Endothelial cell of umbilical vein (primary cell): ENCODE measurements at regions of chr14 and their contacts with region 1.

Region 1: DNA sequence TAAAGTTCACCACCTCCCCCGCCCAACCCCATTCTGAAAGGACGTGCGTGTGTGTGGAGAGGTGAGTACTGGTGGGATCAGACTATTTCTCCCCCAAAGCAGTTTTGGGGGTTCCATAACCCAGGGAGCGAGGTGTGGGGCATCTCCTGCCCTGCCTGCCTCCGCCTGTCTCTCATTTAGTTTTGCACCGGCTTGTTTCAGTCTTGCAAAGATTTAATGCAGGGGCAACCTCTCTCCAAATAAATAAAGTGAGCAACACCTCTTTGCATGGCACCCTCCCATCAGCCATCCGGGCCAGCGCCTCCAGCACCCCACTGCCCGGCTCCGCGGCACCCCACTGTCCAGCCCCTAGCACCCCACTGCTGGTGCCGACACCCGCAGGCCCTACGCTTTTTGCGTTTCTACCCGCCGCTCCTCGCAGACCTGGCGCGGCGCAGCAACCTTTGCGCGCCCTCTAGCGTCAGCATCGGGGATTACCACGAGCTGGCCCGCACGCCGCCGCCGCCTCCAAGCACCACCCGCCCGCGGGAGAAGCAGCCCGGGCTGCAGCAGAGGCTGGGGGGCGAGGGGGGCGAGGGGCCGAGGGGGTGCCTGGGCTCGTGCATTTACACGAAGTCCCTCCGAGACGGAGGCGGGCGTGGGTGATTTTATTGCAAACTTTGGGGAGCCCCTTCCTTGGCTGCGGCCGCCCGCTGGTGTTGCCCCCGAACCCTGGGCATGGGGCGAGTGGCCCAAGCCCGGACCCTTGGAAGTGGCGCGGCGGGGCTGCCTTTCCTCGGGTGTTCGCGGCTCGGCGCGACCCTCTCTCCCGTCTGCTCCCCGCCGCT is 55.8 kb upstream of the VRK1 start:
- DNase-seq: peak; percentile 46
- H3K4me3 ChIP-seq: peak overlapping the region in 1 of 3 experiments; percentile 41
- H3K27ac ChIP-seq: no peak overlapping the region
- H3K4me1 ChIP-seq: no peaks in the 10 kb centered on the region
- H3K27me3 ChIP-seq: peaks cover 16 to 20% of the 10 kb centered on the region in 2 experiments
- CTCF ChIP-seq: peak; percentile 67 to 85
- POLR2A ChIP-seq: no peak

Region 2: GRCh38 chr14:96297000-96297399 is 444.4 kb before region 1 on chr14:
- CTCF ChIA-PET with region 1: interaction called, 3 read pairs
- POLR2A ChIA-PET with region 1: no interaction called
- dilution Hi-C with region 1: no loop called
- intact Hi-C with region 1: loop called (anchors 10 kb)
- DNase-seq: peak; percentile 22
- H3K4me3 ChIP-seq: no peak overlapping the region
- H3K27ac ChIP-seq: no peak overlapping the region
- H3K4me1 ChIP-seq: peaks cover 8% of the 10 kb centered on the region
- H3K27me3 ChIP-seq: no peaks in the 10 kb centered on the region
- CTCF ChIP-seq: peak; percentile 15 to 25
- POLR2A ChIP-seq: no peak

Region 3: DNA sequence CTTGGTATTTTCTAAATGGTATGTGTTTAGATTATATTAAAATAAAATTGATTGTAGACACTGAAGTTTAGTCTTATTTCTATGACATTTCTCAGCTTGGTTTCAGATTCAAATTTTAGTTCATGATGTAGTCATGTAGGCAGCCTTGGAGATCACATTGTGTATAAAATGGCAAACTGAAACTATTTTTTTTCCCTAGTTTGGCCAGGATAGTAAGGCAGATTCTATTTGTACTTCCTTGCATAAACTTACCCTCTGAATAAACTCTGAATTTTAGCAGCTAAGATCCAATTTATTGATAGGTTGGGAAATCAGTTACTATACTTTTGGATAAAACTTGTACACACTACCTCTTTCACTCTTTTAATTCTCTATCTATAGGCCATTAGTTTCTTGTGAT is 208.7 kb before region 1 on chr14:
- CTCF ChIA-PET with region 1: no interaction called
- POLR2A ChIA-PET with region 1: no interaction called
- dilution Hi-C with region 1: no loop called
- intact Hi-C with region 1: no loop called
- DNase-seq: no peak
- H3K4me3 ChIP-seq: no peak overlapping the region
- H3K27ac ChIP-seq: no peak overlapping the region
- H3K4me1 ChIP-seq: no peaks in the 10 kb centered on the region
- H3K27me3 ChIP-seq: no peaks in the 10 kb centered on the region
- CTCF ChIP-seq: no peak
- POLR2A ChIP-seq: no peak

Region 4: DNA sequence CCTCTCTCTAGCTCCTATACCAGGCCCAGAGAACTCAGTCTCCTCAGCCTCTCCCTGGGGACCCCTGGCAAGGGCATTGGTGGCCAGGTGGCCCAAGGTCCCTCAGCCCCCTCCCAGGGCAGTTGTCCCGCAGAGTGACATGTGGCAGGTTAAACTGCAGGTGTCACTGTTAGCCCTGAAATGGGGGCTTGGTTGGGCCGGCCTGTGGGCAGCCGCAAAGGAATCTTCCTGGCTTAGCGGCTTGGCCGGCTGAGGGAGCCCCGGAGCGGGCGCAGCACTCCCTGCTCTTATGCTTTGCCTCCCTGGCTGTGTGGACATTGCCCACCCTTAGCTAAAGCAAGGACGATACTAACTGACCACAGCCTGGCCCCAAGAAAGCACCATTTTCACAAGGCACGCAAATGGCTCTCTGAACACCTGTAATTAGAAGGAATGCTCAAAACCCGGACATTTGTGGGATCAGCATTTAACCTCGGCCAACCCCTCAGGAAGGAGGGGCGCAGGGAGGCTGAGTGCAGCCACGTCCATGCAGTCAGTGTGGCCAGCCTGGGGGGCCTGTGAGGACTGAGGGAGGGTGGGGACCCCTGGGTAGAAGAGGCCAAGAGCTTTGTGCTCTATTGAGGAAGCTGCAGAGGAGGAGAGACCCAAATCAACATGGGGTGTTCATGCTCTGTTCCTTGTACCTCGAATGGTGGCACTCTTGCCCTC is 157.0 kb before region 1 on chr14:
- CTCF ChIA-PET with region 1: interaction called, 7 read pairs
- POLR2A ChIA-PET with region 1: no interaction called
- dilution Hi-C with region 1: no loop called
- intact Hi-C with region 1: loop called (anchors 1 kb)
- DNase-seq: peak; percentile 21
- H3K4me3 ChIP-seq: no peak overlapping the region
- H3K27ac ChIP-seq: no peak overlapping the region
- H3K4me1 ChIP-seq: no peaks in the 10 kb centered on the region
- H3K27me3 ChIP-seq: peaks cover 0 to 4% of the 10 kb centered on the region in 2 experiments
- CTCF ChIP-seq: peak; percentile 27 to 47
- POLR2A ChIP-seq: no peak

Region 5: GRCh38 chr14:96729889-96730288 is 11.5 kb before region 1 on chr14:
- CTCF ChIA-PET with region 1: interaction called, 16 read pairs
- POLR2A ChIA-PET with region 1: no interaction called
- dilution Hi-C with region 1: no loop called
- intact Hi-C with region 1: no loop called
- DNase-seq: no peak
- H3K4me3 ChIP-seq: no peak overlapping the region
- H3K27ac ChIP-seq: no peak overlapping the region
- H3K4me1 ChIP-seq: no peaks in the 10 kb centered on the region
- H3K27me3 ChIP-seq: no peaks in the 10 kb centered on the region
- CTCF ChIP-seq: no peak
- POLR2A ChIP-seq: no peak

Region 6: DNA sequence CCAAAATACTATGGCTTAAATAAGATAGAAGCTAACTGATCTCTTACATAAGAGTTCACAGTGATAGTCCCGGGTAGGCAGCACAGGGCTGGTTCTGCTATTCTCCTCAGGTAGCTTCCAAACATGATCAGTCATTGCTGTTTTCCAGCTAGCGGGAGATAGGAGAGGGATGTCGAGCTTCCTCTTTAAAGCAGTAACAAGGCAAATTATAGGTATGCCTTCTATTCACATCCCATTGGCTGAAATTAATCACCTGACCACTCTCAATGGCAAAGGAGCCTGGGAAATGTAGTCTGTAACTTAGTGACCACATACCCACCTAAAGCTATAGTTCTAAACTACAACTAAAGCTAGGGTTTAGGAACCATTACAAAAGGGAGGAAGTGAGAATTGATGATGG is 21.3 kb after region 1 on chr14:
- CTCF ChIA-PET with region 1: interaction called, 18 read pairs
- POLR2A ChIA-PET with region 1: no interaction called
- dilution Hi-C with region 1: no loop called
- intact Hi-C with region 1: no loop called
- DNase-seq: peak; percentile 77
- H3K4me3 ChIP-seq: no peak overlapping the region
- H3K27ac ChIP-seq: no peak overlapping the region
- H3K4me1 ChIP-seq: peaks cover 2% of the 10 kb centered on the region
- H3K27me3 ChIP-seq: no peaks in the 10 kb centered on the region
- CTCF ChIP-seq: no peak
- POLR2A ChIP-seq: no peak